ENCODE measurements at regions of chr7 and their contacts with region 1.

Region 1: GRCh38 chr7:127792528-127793342 is 140.7 kb downstream of the SND1 start:
- DNase-seq: peak; percentile 42
- ATAC-seq: no peak
- H3K4me3 Mint-ChIP-seq: no peak overlapping the region
- H3K27ac Mint-ChIP-seq: no peak overlapping the region
- H3K4me1 Mint-ChIP-seq: peaks cover 24% of the 10 kb centered on the region
- H3K27me3 Mint-ChIP-seq: no peaks in the 10 kb centered on the region
- CTCF ChIP-seq: peak; percentile 50

Region 2: GRCh38 chr7:127708788-127709187 is 83.9 kb before region 1 on chr7:
- CTCF ChIA-PET with region 1: interaction called, 22 read pairs
- POLR2A ChIA-PET with region 1: no interaction called
- intact Hi-C with region 1: no loop called
- DNase-seq: peak; percentile 84
- ATAC-seq: peak; percentile 72
- H3K4me3 Mint-ChIP-seq: no peak overlapping the region
- H3K27ac Mint-ChIP-seq: no peak overlapping the region
- H3K4me1 Mint-ChIP-seq: peaks cover 2% of the 10 kb centered on the region
- H3K27me3 Mint-ChIP-seq: no peaks in the 10 kb centered on the region
- CTCF ChIP-seq: peak; percentile 76

Region 3: DNA sequence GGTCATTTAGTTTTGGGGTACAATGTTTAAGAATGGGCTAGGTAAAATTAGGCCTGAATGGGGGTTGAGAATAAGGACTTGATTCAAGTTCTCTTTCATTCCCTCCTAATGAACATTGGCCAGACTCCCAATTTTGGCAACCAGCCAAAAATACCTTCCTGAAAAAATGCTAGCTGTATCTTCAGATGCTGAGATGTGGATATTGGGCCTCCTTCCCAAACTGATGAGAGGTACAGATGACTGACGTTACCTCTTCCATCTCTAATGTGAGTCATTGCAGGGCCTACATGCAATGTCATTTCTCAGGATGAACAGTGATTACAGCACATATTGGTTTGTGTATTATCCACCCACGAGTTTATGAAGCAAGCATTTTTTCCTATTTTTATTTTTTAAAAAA is 10.9 kb after region 1 on chr7:
- CTCF ChIA-PET with region 1: interaction called, 10 read pairs
- POLR2A ChIA-PET with region 1: no interaction called
- intact Hi-C with region 1: no loop called
- DNase-seq: no peak
- ATAC-seq: no peak
- H3K4me3 Mint-ChIP-seq: no peak overlapping the region
- H3K27ac Mint-ChIP-seq: no peak overlapping the region
- H3K4me1 Mint-ChIP-seq: peaks cover 26% of the 10 kb centered on the region
- H3K27me3 Mint-ChIP-seq: no peaks in the 10 kb centered on the region
- CTCF ChIP-seq: no peak

Region 4: GRCh38 chr7:127809261-127809702 is 16.5 kb after region 1 on chr7:
- CTCF ChIA-PET with region 1: interaction called, 10 read pairs
- POLR2A ChIA-PET with region 1: no interaction called
- intact Hi-C with region 1: no loop called
- DNase-seq: no peak
- ATAC-seq: no peak
- H3K4me3 Mint-ChIP-seq: no peak overlapping the region
- H3K27ac Mint-ChIP-seq: no peak overlapping the region
- H3K4me1 Mint-ChIP-seq: peaks cover 33% of the 10 kb centered on the region
- H3K27me3 Mint-ChIP-seq: no peaks in the 10 kb centered on the region
- CTCF ChIP-seq: no peak

Region 5: GRCh38 chr7:127828843-127829500 is 36.2 kb after region 1 on chr7:
- CTCF ChIA-PET with region 1: no interaction called
- POLR2A ChIA-PET with region 1: no interaction called
- intact Hi-C with region 1: no loop called
- DNase-seq: no peak
- ATAC-seq: no peak
- H3K4me3 Mint-ChIP-seq: no peak overlapping the region
- H3K27ac Mint-ChIP-seq: no peak overlapping the region
- H3K4me1 Mint-ChIP-seq: peaks cover 2% of the 10 kb centered on the region
- H3K27me3 Mint-ChIP-seq: no peaks in the 10 kb centered on the region
- CTCF ChIP-seq: no peak